Left ventricle myocardium superior (tissue), 1 donor: ENCODE measurements at regions of chr3 and their contacts with region 1.

Region 1: DNA sequence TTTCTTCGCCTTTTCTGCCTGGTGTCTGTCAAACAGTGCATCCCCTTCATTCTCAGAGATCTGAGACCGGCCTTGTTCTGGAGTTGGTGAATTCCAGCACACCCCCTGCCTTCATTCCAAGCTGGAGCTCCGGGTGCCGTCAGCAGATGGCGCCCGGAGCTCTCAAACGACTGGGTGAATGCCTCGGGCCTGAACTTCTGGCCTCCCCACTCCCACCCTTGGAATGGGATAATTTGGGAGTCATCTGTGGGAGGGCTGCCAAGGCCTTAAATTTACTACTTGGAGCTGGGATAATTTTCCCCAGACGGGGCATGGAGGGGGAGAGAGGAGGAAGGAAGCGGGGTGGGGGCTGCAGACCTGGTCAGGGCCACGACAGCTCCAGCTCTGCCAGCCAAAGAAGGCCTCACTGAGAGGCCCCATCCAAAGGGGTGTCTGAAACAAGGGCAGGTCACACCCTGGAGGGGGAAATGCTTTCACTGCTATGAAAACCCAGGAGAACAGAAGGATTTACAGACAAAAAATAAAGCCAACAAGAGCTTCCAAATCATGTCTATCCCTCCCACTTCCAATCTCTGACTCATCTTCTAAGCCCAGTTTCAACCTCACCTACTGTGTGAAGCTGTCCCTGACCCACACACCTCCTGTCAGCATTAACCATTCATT is 187.9 kb downstream of the OPA1 start:
- DNase-seq: peak; percentile 82
- ATAC-seq: peak; percentile 95

Region 2: DNA sequence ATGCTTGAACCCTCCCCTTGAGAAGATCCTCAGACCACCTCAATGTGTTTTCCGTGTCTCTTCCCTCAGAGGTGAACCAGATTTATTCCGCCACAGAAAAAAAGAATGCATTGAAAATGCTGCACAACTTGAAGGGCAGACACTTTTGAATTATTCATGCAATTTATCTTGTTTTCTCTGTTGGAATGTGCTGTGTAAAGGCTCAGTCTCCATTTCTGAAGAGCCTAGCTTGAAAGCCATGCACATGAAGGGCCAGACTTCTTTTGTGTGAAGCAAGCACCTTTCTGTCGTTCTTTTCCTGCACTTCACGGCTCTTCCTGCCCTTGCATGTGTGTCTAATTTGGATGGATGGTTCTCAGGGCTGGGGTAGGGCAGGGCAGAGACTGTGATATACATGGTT is 323.4 kb before region 1 on chr3:
- intact Hi-C with region 1: no loop called
- DNase-seq: no peak
- ATAC-seq: no peak

Region 3: DNA sequence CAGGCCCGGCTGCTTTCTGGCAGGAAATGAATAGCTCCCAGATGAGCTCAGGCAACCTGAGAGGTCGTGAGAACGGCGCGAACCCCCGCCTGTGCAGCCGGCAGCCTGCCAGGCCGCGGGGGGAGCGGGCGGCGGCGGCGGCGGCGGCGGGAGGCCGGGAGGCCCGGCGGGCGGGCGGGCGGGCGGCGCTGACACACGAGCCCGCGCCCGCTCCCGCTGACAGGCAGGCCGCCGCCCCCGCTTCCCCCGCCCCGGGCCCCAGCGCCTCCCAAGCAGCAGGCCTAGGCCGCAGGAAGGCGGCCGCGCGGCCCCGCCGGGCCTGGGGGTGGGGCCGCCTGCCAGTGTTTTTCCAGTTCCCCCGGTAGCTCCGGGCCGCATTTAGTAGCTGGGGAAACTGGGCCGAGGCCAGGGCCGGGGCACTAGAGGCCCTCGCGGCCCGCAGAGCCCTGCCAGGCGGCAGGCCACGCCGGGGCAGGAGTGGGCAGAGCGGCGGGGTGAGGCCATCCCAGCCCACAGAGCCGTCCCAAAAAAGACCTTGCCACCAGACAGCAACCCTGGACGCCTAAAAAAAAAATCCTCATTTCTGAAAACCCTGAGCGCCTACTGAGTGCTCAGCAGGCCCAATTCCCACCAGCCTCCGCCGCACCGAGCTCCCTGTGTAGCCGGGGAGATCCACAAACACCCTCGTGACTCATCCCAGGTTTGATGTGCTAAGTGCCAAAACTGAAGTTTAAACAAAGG is 360.6 kb after region 1 on chr3:
- intact Hi-C with region 1: loop called (anchors 5 kb)
- DNase-seq: peak; percentile 96
- ATAC-seq: peak; percentile 81